ENCODE measurements at regions of chr2 and their contacts with region 1.

Region 1: GRCh38 chr2:219029829-219030165 is 11.5 kb downstream of the CFAP65 start:
- DNase-seq: peak; percentile 73 to 85 (median 78)
- H3K4me3 ChIP-seq: no peak overlapping the region
- H3K27ac ChIP-seq: no peak overlapping the region
- H3K4me1 ChIP-seq: peaks cover 0 to 2% (median 0%) of the 10 kb centered on the region in 4 experiments
- H3K27me3 ChIP-seq: peaks cover 1 to 18% (median 6%) of the 10 kb centered on the region in 5 experiments

Region 2: GRCh38 chr2:218995972-218996711 is 33.7 kb before region 1 on chr2:
- CTCF ChIA-PET with region 1: interaction called, 12 read pairs
- POLR2A ChIA-PET with region 1: no interaction called
- DNase-seq: peak; percentile 75 to 83 (median 81)
- H3K4me3 ChIP-seq: peak overlapping the region in 3 of 7 experiments; percentile 41 to 54 (median 46)
- H3K27ac ChIP-seq: no peak overlapping the region
- H3K4me1 ChIP-seq: peaks cover 0 to 24% (median 16%) of the 10 kb centered on the region in 4 experiments
- H3K27me3 ChIP-seq: peaks cover 9 to 98% (median 68%) of the 10 kb centered on the region in 5 experiments

Region 3: GRCh38 chr2:219057709-219058540 is 28.1 kb after region 1 on chr2:
- CTCF ChIA-PET with region 1: interaction called, 13 read pairs
- POLR2A ChIA-PET with region 1: no interaction called
- DNase-seq: peak; percentile 56 to 75 (median 71)
- H3K4me3 ChIP-seq: peak overlapping the region in 4 of 7 experiments; percentile 15 to 58 (median 46)
- H3K27ac ChIP-seq: no peak overlapping the region
- H3K4me1 ChIP-seq: peaks cover 0 to 41% (median 21%) of the 10 kb centered on the region in 4 experiments
- H3K27me3 ChIP-seq: peaks cover 0 to 91% (median 40%) of the 10 kb centered on the region in 5 experiments

Region 4: DNA sequence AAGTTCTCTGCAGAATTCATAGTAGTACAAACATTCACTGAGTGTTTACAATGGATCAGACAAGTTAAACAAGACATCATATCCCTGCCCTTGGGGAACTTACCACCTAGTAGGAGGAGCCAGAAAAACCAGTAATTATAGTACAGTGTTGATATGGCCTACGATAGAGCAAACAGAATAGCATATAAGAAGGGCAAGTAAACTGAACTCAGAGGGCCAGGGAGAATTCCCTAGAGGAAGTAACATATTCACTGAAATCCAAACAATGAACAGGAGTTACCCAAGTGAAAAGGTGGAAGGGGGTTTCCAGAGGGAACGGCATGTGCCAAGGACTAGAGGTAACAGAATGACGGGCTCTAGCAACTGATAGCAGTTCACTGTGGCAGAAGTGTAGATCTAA is 96.8 kb after region 1 on chr2:
- CTCF ChIA-PET with region 1: interaction called, 14 read pairs
- POLR2A ChIA-PET with region 1: no interaction called
- DNase-seq: no peak
- H3K4me3 ChIP-seq: no peak overlapping the region
- H3K27ac ChIP-seq: no peak overlapping the region
- H3K4me1 ChIP-seq: peaks cover 0 to 24% (median 7%) of the 10 kb centered on the region in 4 experiments
- H3K27me3 ChIP-seq: no peaks in the 10 kb centered on the region

Region 5: GRCh38 chr2:219344751-219345430 is 315.1 kb after region 1 on chr2:
- CTCF ChIA-PET with region 1: no interaction called
- POLR2A ChIA-PET with region 1: no interaction called
- DNase-seq: peak in 2 of 3 donors; percentile 60 to 69
- H3K4me3 ChIP-seq: no peak overlapping the region
- H3K27ac ChIP-seq: no peak overlapping the region
- H3K4me1 ChIP-seq: no peaks in the 10 kb centered on the region
- H3K27me3 ChIP-seq: peaks cover 0 to 44% (median 9%) of the 10 kb centered on the region in 5 experiments

Region 6: GRCh38 chr2:219612577-219613286 is 582.9 kb after region 1 on chr2:
- CTCF ChIA-PET with region 1: no interaction called
- POLR2A ChIA-PET with region 1: no interaction called
- DNase-seq: peak; percentile 26 to 87 (median 74)
- H3K4me3 ChIP-seq: no peak overlapping the region
- H3K27ac ChIP-seq: no peak overlapping the region
- H3K4me1 ChIP-seq: peaks cover 0 to 16% (median 10%) of the 10 kb centered on the region in 4 experiments
- H3K27me3 ChIP-seq: no peaks in the 10 kb centered on the region

Measured in common myeloid progenitor, CD34-positive (primary cell).